Motor neuron (in vitro differentiated cells): ENCODE measurements at regions of chr3 and their contacts with region 1.

Region 1: GRCh38 chr3:98395101-98395500 is 4.6 kb downstream of the OR5K3 start:
- ATAC-seq: no peak
- H3K4me3 ChIP-seq: no peak overlapping the region
- H3K27ac ChIP-seq: no peak overlapping the region
- H3K4me1 ChIP-seq: no peaks in the 10 kb centered on the region

Region 2: DNA sequence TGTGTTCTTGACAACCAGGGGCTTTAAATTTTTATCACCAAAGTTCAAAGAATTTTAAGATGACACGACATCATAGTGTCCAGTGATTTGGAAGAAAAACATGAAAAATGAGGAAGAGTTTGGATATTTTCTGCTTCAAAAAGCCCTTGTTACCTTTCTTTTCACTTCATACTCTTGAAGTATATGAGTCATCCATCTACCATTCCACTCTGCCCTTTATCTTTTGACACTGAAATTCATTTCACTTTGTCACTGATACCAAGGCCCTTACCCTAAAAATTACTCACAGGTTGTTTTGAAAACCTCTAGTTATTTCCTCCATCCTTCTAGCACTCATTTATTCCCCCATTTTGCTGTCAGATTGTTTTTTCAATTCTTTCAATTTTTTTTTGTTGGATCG is 185.9 kb before region 1 on chr3:
- in situ Hi-C with region 1: no loop called
- ATAC-seq: no peak
- H3K4me3 ChIP-seq: no peak overlapping the region
- H3K27ac ChIP-seq: no peak overlapping the region
- H3K4me1 ChIP-seq: no peaks in the 10 kb centered on the region

Region 3: DNA sequence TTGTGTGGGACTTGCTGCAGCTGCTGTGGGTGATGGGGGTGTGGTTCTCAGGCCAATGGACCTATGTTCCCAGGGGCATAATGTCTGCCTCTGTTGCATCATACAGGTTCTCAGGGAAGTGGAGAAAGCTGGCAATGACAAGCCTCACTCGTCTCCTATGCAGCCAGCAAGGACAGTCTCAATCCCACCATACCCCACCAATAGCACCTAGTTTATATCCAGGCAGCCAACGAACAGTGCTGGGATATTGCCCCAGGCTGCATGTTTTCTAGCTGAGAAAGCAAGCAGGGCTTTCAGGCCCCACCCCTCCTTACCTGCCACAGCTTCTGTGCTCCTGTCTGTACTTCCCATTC is 88.0 kb after region 1 on chr3:
- in situ Hi-C with region 1: loop called in 1 of 9 experiments (anchors 25 kb)
- ATAC-seq: no peak
- H3K4me3 ChIP-seq: no peak overlapping the region
- H3K27ac ChIP-seq: no peak overlapping the region
- H3K4me1 ChIP-seq: no peaks in the 10 kb centered on the region

Region 4: DNA sequence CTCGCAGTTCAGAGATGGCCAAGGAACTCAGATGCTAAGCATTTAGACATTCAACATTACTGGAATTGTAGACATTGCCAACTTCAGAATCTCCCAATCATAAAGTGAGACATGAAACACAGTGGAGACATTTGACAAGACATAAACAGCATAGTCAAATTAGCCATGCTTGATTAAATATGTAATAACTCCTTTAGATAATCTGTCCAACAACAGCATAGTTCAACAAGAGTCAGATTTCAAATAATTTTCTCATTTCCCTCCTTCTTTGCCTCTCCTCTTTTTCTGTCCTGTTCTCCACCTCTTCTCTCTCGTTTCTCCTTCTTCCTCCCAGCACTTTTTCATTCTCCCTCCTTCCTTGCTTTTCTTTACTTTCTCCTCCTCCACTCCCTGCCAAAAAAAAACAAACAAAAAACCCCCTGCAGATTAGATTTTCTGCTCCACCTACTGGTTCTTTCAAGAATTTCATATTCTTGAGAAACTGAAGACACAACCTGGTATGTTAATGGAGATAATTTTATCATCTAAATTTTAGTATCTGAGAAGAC is 178.2 kb after region 1 on chr3:
- in situ Hi-C with region 1: loop called in 1 of 9 experiments (anchors 25 kb)
- ATAC-seq: peak in 3 of 8 experiments; percentile 37 to 62 (median 41)
- H3K4me3 ChIP-seq: no peak overlapping the region
- H3K27ac ChIP-seq: no peak overlapping the region
- H3K4me1 ChIP-seq: no peaks in the 10 kb centered on the region